MCF 10A (cell line): ENCODE measurements at regions of chr9 and their contacts with region 1.

Region 1: DNA sequence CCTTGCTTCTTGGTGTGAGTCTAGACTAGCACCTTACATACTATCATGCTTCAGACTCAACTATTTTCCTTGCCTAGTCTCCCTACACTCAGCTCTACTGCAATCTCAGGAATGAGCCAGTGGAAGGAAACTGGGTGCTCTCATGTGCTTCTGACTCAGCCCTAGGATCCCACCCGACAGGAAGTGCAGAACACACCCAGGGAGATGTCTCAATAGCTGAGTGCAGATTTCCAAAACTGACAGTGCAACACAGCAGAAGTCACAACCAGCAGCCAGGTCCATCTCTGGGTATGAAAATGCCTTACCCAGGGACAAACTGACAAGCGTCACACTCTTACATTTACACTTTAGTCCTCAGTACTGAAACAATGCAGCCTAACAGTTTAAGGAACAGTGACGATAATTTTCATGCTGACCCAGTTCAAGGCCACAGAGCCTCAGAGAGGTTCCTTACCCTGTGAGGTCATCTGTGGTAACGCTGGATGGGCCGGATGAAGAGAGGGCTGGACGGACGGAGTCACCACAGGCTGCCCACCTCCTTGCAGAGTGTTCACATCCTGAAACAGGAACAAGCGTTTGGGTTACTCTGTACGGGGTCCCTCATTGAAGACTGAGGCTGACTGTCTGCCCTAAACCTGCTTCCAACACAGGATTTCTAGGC is 33.0 kb downstream of the FKBP15 start:
- DNase-seq: peak; percentile 92
- H3K4me3 Mint-ChIP-seq: peak overlapping the region; percentile 60
- H3K27ac Mint-ChIP-seq: peak overlapping the region; percentile 96
- H3K4me1 Mint-ChIP-seq: peaks cover 45% of the 10 kb centered on the region
- H3K27me3 Mint-ChIP-seq: no peaks in the 10 kb centered on the region
- CTCF ChIP-seq: no peak

Region 2: GRCh38 chr9:112841261-112841660 is 346.8 kb before region 1 on chr9:
- CTCF ChIA-PET with region 1: no interaction called
- POLR2A ChIA-PET with region 1: no interaction called
- intact Hi-C with region 1: no loop called
- DNase-seq: no peak
- H3K4me3 Mint-ChIP-seq: no peak overlapping the region
- H3K27ac Mint-ChIP-seq: no peak overlapping the region
- H3K4me1 Mint-ChIP-seq: peaks cover 4% of the 10 kb centered on the region
- H3K27me3 Mint-ChIP-seq: no peaks in the 10 kb centered on the region
- CTCF ChIP-seq: no peak

Region 3: DNA sequence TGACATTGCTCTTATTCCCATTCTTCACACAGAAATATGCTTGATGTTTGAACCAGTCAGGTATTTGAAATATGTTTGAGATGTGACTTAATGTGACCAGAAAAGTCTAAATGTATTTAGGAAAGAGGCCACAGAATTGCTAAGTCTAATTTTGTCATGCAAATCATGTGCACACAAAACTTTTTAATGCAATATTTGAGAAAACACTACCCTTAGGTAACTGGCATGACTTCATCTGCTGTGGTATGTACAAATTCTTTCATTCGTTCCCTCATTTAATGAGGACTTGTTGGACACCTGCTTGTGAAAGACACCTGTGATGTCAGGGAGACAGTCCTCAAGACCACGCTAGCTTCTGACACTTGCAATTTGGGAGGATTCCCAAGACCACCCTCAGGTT is 276.3 kb before region 1 on chr9:
- CTCF ChIA-PET with region 1: no interaction called
- POLR2A ChIA-PET with region 1: no interaction called
- intact Hi-C with region 1: no loop called
- DNase-seq: no peak
- H3K4me3 Mint-ChIP-seq: no peak overlapping the region
- H3K27ac Mint-ChIP-seq: no peak overlapping the region
- H3K4me1 Mint-ChIP-seq: no peaks in the 10 kb centered on the region
- H3K27me3 Mint-ChIP-seq: peaks cover 10% of the 10 kb centered on the region
- CTCF ChIP-seq: no peak

Region 4: DNA sequence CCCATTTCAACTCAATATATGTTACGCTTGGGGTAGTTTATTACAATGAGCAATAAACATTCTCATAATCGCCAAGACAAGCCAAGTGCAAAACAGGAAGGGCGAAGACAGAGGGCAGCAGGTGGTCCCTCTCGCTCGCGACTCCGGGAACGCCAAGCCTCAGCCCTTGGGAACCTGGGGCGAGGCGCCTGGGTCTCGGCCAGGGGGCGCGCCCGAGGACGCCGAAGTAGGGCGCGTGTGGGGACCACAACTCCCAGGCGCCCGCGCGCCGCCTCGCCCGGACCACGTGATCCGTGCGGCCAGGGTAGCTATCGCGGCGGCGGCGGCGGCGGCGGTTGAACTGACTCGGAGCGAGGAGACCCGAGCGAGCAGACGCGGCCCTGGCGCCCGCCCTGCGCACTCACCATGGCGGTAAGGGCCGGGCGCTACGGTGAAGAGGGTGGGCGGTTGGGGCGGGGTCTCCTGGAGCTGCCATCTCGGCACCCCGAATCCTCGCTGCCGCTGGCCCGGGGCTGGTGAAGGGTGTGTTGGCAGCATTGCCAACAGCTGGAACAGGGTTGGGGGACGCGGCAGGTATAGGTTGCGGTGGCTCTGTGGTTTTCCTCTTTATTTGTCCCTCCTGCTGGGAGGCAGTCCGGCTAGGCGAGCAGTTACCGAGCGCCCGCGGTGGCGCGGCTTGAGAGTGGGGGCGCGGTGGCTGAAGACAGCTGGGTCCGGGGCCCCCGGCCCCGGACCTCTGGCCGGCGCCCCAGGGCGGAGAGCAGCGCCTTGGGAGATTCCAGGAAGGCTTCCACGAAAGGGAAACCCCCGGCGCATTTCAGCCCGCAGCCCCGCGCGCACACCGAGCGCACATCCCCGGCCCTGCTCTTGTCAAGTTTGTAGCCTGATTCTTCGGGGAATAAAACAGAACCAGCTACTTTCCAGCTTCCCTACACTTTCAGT is 37.1 kb before region 1 on chr9 and contains the start of gene SLC31A2:
- CTCF ChIA-PET with region 1: interaction called, 4 read pairs
- POLR2A ChIA-PET with region 1: interaction called, 38 read pairs
- intact Hi-C with region 1: no loop called
- DNase-seq: peak; percentile 83
- H3K4me3 Mint-ChIP-seq: peak within 1 kb of the TSS; percentile 65
- H3K27ac Mint-ChIP-seq: peak within 1 kb of the TSS; percentile 50
- H3K4me1 Mint-ChIP-seq: peaks cover 27% of the 10 kb centered on the region
- H3K27me3 Mint-ChIP-seq: peaks cover 10% of the 10 kb centered on the region
- CTCF ChIP-seq: peak; percentile 22
- total RNA-seq, gene SLC31A2: 14.9 and 16.1 TPM in 2 replicates